Mammary epithelial cell (primary cell): ENCODE measurements at regions of chr3 and their contacts with region 1.

Region 1: GRCh38 chr3:50272911-50273693 is 4.2 kb downstream of the SEMA3B start:
- DNase-seq: peak; percentile 74
- H3K4me3 ChIP-seq: peak overlapping the region; percentile 3 to 47 (median 41)
- H3K27ac ChIP-seq: no peak overlapping the region
- H3K4me1 ChIP-seq: peaks cover 38% of the 10 kb centered on the region
- H3K27me3 ChIP-seq: no peaks in the 10 kb centered on the region
- CTCF ChIP-seq: peak; percentile 98

Region 2: DNA sequence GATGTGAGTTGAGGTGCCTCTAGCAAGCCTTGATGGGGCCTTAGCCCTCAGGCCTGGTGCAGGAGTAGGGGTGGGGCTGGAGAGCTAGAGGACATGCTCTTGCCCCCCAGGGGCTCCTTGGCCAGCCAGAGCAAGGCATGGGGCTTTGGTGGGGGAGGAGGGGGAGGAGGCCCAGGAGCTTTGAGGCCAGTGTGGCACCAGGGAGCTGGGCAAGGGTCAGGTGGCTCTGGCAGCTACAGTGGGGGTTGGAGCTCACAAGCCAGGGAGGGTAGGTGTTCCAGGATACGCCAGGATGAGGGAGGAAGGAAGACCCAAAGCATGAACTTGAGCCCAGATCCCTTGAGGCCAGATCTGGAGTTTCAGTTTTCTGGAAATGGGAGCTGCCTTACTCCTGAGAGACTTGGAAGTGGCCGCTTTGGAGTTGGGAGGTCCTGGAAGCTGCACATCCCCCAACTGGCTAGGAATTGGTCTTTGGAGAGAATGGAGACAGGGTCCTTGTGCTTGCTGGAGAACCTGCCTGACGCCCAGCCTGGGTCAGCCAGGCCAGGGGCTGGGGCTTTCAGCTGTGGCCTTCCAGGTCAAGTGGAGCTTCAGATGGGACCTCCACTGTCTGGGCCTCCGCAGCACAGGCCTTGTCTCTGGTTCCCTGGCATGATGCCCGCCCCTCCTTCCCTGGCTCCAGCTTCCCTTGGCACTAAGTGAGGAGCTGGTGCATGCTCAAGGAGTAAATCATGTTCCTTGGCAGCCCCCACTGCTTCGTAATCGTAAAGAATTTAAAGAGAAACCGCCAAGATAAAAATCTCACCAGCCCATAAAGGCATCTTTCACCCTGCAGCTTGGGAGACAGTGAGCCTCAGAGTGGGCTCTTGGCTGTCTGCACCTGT is 109.3 kb before region 1 on chr3:
- CTCF ChIA-PET with region 1: no interaction called
- dilution Hi-C with region 1: no loop called
- in situ Hi-C with region 1: no loop called
- intact Hi-C with region 1: loop called (anchors 1 kb)
- DNase-seq: peak; percentile 93
- H3K4me3 ChIP-seq: no peak overlapping the region
- H3K27ac ChIP-seq: peak overlapping the region; percentile 30
- H3K4me1 ChIP-seq: peaks cover 95% of the 10 kb centered on the region
- H3K27me3 ChIP-seq: no peaks in the 10 kb centered on the region
- CTCF ChIP-seq: no peak

Region 3: DNA sequence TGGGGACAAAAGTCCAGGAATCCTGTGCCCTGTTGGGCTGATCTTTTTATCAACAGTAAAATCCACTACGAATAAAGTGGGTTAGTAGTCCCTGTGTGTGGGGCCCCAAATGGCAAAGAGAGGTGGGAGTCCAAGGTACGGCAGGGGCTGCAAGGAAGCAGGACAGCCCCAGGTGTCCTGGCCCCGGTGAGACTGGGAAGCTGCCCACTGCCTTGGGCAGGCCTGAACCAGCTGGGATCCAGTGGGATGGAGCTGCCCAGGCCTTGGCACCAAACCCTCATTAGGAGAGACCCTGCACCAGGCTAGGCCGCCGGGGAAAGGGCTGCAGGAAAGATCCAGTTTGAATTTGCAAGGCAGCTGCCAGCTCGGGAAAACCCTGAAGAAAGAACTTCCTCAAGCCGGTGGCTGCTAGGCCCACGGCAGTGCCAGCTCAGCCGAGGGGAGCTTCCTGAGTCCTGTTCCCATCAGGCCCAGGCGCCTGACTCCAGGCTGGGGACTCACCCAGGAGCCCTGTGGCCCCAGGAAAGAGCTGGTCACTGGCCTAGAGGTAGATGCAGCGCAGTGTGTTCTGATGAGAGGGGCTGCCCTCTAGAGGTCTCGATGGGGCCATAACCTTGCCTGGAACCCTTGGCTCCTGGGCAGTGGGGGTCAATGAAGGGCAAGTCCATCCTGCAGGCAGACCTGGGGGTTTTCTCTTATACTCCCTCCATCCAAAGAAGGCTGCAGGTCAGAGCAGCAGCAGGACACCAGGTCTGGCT is 51.5 kb before region 1 on chr3:
- CTCF ChIA-PET with region 1: no interaction called
- dilution Hi-C with region 1: loop called (anchors 5 kb)
- in situ Hi-C with region 1: loop called in 1 of 2 experiments (anchors 5 kb)
- intact Hi-C with region 1: no loop called
- DNase-seq: no peak
- H3K4me3 ChIP-seq: no peak overlapping the region
- H3K27ac ChIP-seq: no peak overlapping the region
- H3K4me1 ChIP-seq: peaks cover 7% of the 10 kb centered on the region
- H3K27me3 ChIP-seq: no peaks in the 10 kb centered on the region
- CTCF ChIP-seq: no peak

Region 4: GRCh38 chr3:50245831-50246516 is 27.1 kb before region 1 on chr3:
- CTCF ChIA-PET with region 1: interaction called, 4 read pairs
- dilution Hi-C with region 1: no loop called
- in situ Hi-C with region 1: no loop called
- intact Hi-C with region 1: loop called (anchors 1 kb)
- DNase-seq: no peak
- H3K4me3 ChIP-seq: peak overlapping the region in 2 of 3 experiments; percentile 19 to 41
- H3K27ac ChIP-seq: peak overlapping the region; percentile 75
- H3K4me1 ChIP-seq: peaks cover 78% of the 10 kb centered on the region
- H3K27me3 ChIP-seq: no peaks in the 10 kb centered on the region
- CTCF ChIP-seq: peak; percentile 93 to 99

Region 5: GRCh38 chr3:50321336-50322114 is 48.4 kb after region 1 on chr3:
- CTCF ChIA-PET with region 1: no interaction called
- dilution Hi-C with region 1: loop called (anchors 5 kb)
- in situ Hi-C with region 1: loop called in 1 of 2 experiments (anchors 10 kb)
- intact Hi-C with region 1: loop called (anchors 1 kb)
- DNase-seq: peak; percentile 85
- H3K4me3 ChIP-seq: peak overlapping the region; percentile 43 to 72 (median 64)
- H3K27ac ChIP-seq: peak overlapping the region; percentile 98
- H3K4me1 ChIP-seq: peaks cover 46% of the 10 kb centered on the region
- H3K27me3 ChIP-seq: no peaks in the 10 kb centered on the region
- CTCF ChIP-seq: peak; percentile 1 to 48

Region 6: DNA sequence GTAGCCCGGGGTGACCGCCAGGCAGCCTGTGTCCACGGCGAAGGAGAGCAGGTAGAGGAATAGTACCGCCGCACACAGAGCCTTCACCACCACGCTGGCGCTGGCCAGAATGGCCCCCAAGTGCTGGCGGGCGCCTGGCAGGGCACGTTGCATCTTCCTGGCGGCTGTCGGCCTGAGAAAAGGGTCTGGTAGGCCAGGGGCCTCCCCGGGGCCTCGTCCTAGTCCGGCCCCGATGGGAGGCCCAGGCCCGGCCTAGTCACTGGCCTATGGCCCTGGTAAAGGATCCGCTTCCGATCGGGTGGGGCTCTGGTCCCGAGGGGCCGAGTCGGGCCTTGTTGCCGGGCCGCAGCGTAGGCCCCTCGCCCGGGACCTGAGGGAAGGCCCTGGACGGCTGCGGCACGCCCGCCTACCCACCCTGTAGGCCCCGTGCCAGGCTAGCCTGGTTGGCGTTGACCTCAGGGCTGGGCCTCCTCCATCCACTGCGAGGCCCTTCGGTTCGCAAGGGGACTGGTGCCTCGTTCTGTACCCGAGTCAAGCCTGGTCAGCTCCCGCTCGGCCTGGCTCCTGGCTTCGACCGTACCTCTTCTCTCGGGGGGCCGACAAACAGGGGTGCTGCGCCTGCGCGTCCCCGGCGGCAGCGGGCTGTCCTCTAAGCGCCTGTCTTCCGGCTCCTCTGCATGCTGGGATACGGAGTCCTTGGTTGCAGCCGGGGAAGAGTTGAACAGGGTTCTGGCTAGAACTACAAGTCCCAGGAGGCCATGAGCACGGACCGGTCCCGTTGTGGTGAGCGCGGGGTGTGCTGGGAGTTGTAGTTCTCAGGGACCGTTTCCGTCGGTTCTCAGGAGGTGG is 86.0 kb after region 1 on chr3 and contains the start of gene TMEM115:
- CTCF ChIA-PET with region 1: no interaction called
- dilution Hi-C with region 1: no loop called
- in situ Hi-C with region 1: no loop called
- intact Hi-C with region 1: no loop called
- DNase-seq: peak; percentile 98
- H3K4me3 ChIP-seq: peak within 1 kb of the TSS; percentile 62 to 97 (median 90)
- H3K27ac ChIP-seq: peak within 1 kb of the TSS; percentile 66
- H3K4me1 ChIP-seq: peaks cover 32% of the 10 kb centered on the region
- H3K27me3 ChIP-seq: no peaks in the 10 kb centered on the region
- CTCF ChIP-seq: no peak
- total RNA-seq, gene TMEM115: 37.6 to 42.8 TPM

Region 7: DNA sequence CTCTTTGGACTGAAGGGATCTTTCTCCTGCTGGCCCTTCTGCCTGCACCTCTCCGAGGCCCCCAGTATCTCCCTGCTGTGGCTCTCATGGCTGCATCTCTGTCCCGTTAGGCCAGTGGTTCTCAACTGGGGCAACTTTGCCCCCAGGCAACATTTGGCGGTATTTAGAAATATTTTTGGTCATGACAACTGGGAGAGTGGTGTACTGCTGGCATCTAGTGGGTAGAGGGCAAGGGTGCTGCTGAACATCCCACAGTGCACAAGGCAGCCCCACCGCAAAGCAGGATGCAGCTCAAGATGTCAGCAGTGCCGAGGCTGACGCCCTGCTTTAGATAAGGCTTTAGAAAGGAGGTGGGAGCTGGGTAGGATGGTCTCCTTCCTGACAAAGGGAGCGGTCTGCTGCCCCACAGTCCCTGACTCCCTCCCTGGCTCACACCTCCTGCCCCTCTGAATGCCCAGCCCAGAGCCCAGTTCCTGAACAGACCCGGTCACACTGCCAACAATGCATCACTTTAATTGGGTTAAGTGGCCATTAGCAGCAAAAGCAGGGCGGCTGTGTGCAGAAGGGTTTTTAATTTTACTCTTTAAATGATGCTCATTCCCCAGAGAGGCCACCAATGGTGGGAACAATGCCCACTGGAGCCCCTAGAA is 155.0 kb after region 1 on chr3:
- CTCF ChIA-PET with region 1: no interaction called
- dilution Hi-C with region 1: loop called (anchors 5 kb)
- in situ Hi-C with region 1: no loop called
- intact Hi-C with region 1: no loop called
- DNase-seq: peak; percentile 30
- H3K4me3 ChIP-seq: no peak overlapping the region
- H3K27ac ChIP-seq: no peak overlapping the region
- H3K4me1 ChIP-seq: no peaks in the 10 kb centered on the region
- H3K27me3 ChIP-seq: no peaks in the 10 kb centered on the region
- CTCF ChIP-seq: peak; percentile 33 to 54